CD14-positive monocyte (primary cell): ENCODE measurements at regions of chr6 and their contacts with region 1.

Region 1: DNA sequence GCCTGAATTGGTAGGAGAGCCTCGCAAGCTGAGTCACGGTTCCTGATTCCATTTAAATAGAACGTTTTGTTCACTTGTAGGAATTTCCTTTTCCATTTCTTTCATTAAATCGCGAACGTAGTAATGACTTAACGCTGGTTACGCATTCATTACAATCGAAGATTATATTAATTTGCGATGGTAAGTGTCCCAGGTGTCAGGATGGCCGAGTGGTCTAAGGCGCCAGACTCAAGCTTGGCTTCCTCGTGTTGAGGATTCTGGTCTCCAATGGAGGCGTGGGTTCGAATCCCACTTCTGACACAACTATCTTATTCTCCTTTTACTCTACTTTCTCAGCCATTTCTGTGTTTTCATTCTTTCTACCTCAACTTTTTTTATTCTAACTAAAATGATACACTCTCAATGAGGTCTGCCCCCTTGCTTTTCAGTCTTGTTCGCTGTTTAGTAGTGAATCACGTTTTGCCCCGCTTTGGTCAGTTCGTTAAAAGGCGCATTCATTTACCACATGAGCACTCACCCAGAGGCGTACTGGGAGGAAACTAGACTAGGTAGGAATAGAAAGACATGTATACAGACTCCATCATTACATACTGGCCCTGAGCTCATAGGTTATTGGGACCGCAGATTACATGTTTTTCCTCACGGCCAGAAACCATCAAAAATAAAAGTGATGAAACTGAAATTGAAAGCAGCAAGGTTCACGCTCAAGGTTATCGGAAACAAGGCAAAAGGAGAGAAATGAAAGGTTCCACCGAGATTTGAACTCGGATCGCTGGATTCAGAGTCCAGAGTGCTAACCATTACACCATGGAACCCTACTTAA is 17.3 kb upstream of the TRIM27 start:
- DNase-seq: peak; percentile 68 to 79 (median 77)
- H3K4me3 ChIP-seq: peak overlapping the region; percentile 48 to 92 (median 92)
- H3K4me3 Mint-ChIP-seq: peak overlapping the region; percentile 88 to 98
- H3K27ac ChIP-seq: peak overlapping the region; percentile 43 to 46
- H3K27ac Mint-ChIP-seq: peak overlapping the region; percentile 77 to 89 (median 86)
- H3K4me1 ChIP-seq: peaks cover 53 to 54% of the 10 kb centered on the region in 2 donors
- H3K4me1 Mint-ChIP-seq: peaks cover 60% of the 10 kb centered on the region
- H3K27me3 ChIP-seq: no peaks in the 10 kb centered on the region
- H3K27me3 Mint-ChIP-seq: peaks cover 0 to 1% (median 0%) of the 10 kb centered on the region in 3 donors
- CTCF ChIP-seq: no peak

Region 2: GRCh38 chr6:28838634-28839442 is 102.2 kb before region 1 on chr6:
- intact Hi-C with region 1: loop called (anchors 2 to 10 kb)
- DNase-seq: peak; percentile 42 to 68 (median 43)
- H3K4me3 ChIP-seq: peak overlapping the region; percentile 54 to 83 (median 83)
- H3K4me3 Mint-ChIP-seq: peak overlapping the region; percentile 85 to 88
- H3K27ac ChIP-seq: no peak overlapping the region
- H3K27ac Mint-ChIP-seq: no peak overlapping the region
- H3K4me1 ChIP-seq: peaks cover 25 to 29% of the 10 kb centered on the region in 2 donors
- H3K4me1 Mint-ChIP-seq: peaks cover 25% of the 10 kb centered on the region
- H3K27me3 ChIP-seq: peaks cover 25 to 69% of the 10 kb centered on the region in 2 donors
- H3K27me3 Mint-ChIP-seq: peaks cover 63 to 87% (median 69%) of the 10 kb centered on the region in 3 donors
- CTCF ChIP-seq: peak; percentile 63

Region 3: DNA sequence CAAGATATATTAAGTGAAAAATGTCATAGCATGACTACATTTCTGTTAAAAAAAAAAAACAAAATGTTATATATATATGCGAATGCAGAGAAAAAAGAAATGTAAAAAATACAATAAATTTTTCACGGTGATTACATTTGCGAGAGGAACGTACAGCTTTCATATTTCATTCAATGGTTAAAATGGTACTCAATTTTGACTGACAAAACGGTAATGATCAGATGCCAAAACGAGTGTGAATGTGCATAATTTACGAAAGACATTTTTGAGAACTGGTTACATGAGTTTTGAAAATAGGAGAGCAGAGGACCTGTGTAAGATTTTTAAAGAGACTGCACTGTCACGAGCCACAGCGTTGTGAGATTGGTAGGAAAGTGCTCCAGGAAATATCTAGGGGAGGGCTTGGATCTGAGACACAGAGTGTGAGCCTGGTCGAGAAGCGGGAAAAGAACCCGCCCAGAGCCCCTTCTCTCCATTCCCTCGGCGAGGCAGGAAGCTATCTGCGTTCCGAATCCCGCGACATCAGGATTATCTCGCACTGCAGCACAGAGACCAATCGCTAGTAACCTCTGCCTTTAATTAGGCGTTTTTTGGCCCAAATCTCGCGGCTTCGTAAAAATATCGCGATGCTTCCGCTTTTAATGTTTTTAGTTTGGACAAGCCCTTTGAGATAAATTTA is 45.8 kb before region 1 on chr6:
- intact Hi-C with region 1: loop called (anchors 1 to 5 kb)
- DNase-seq: peak; percentile 90 to 97 (median 93)
- H3K4me3 ChIP-seq: peak overlapping the region; percentile 49 to 90 (median 81)
- H3K4me3 Mint-ChIP-seq: peak overlapping the region; percentile 94 to 95
- H3K27ac ChIP-seq: peak overlapping the region; percentile 83 to 95
- H3K27ac Mint-ChIP-seq: peak overlapping the region; percentile 98 to 99 (median 99)
- H3K4me1 ChIP-seq: peaks cover 13 to 16% of the 10 kb centered on the region in 2 donors
- H3K4me1 Mint-ChIP-seq: peaks cover 15% of the 10 kb centered on the region
- H3K27me3 ChIP-seq: no peaks in the 10 kb centered on the region
- H3K27me3 Mint-ChIP-seq: peaks cover 3 to 6% (median 4%) of the 10 kb centered on the region in 3 donors
- CTCF ChIP-seq: no peak